Endothelial cell of umbilical vein (primary cell): ENCODE measurements at regions of chr1 and their contacts with region 1.

Region 1: GRCh38 chr1:81760477-81761097 is 40.1 kb upstream of the ADGRL2 start:
- DNase-seq: peak; percentile 62
- H3K4me3 ChIP-seq: no peak overlapping the region
- H3K27ac ChIP-seq: no peak overlapping the region
- H3K4me1 ChIP-seq: peaks cover 3% of the 10 kb centered on the region
- H3K27me3 ChIP-seq: no peaks in the 10 kb centered on the region
- CTCF ChIP-seq: peak; percentile 7 to 18
- POLR2A ChIP-seq: no peak

Region 2: DNA sequence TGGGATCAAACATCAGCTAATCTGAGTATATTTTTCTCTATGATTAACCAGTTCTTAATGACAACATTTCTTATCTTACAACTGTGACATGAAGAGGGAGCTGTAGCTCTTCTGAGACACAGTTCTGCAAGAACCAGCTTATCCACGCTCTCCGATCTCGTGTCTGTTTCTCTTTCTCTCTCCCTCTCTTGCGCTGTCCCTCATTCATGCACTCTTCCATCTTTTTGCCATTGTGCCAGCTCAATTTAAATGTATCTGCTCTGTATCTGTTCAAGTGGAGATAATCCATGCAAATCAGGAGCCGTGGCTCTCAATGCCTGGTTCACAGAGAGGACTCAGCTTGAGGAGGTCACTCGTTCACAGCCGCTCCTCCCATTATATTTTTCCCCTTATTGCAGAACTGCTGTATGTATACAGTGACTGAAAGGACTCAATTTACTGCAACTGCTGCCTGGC is 454.6 kb before region 1 on chr1:
- CTCF ChIA-PET with region 1: interaction called, 15 read pairs
- POLR2A ChIA-PET with region 1: no interaction called
- dilution Hi-C with region 1: no loop called
- intact Hi-C with region 1: loop called (anchors 10 kb)
- DNase-seq: peak; percentile 65
- H3K4me3 ChIP-seq: peak overlapping the region; percentile 42 to 75 (median 47)
- H3K27ac ChIP-seq: no peak overlapping the region
- H3K4me1 ChIP-seq: no peaks in the 10 kb centered on the region
- H3K27me3 ChIP-seq: peaks cover 0 to 4% of the 10 kb centered on the region in 2 experiments
- CTCF ChIP-seq: peak; percentile 15 to 28
- POLR2A ChIP-seq: no peak

Region 3: DNA sequence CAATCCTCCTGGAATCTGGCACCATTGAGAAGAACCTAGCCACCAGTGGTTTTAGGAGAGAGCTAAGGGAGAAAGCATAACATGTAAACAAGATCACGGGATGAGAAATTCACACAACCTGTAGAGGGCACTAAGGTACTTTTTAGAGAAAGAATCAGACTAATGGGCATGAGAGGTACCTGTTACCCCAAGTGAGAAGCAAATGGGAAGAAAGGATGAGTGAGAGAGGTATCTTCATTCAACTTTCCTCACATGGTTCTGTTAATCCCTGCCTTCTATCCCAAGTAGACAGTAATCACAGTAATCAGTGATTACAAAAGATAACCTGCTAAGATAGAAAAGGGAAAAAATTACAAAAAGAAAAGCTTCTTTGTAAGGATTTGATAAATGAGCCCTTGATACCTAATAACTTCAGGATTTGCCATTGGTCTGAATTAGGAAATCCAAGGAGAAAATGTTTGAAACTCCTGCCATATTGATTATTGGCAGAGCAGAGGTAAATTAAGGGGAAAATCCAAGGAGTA is 210.9 kb before region 1 on chr1:
- CTCF ChIA-PET with region 1: interaction called, 201 read pairs
- POLR2A ChIA-PET with region 1: no interaction called
- dilution Hi-C with region 1: no loop called
- intact Hi-C with region 1: loop called (anchors 1 kb)
- DNase-seq: peak; percentile 77
- H3K4me3 ChIP-seq: no peak overlapping the region
- H3K27ac ChIP-seq: no peak overlapping the region
- H3K4me1 ChIP-seq: no peaks in the 10 kb centered on the region
- H3K27me3 ChIP-seq: no peaks in the 10 kb centered on the region
- CTCF ChIP-seq: peak; percentile 31 to 41
- POLR2A ChIP-seq: no peak

Region 4: GRCh38 chr1:81670286-81670685 is 90.3 kb before region 1 on chr1:
- CTCF ChIA-PET with region 1: interaction called, 15 read pairs
- POLR2A ChIA-PET with region 1: no interaction called
- dilution Hi-C with region 1: no loop called
- intact Hi-C with region 1: no loop called
- DNase-seq: peak; percentile 98
- H3K4me3 ChIP-seq: no peak overlapping the region
- H3K27ac ChIP-seq: no peak overlapping the region
- H3K4me1 ChIP-seq: peaks cover 8% of the 10 kb centered on the region
- H3K27me3 ChIP-seq: no peaks in the 10 kb centered on the region
- CTCF ChIP-seq: no peak
- POLR2A ChIP-seq: no peak

Region 5: GRCh38 chr1:81731989-81732388 is 28.6 kb before region 1 on chr1:
- CTCF ChIA-PET with region 1: interaction called, 11 read pairs
- POLR2A ChIA-PET with region 1: no interaction called
- dilution Hi-C with region 1: no loop called
- intact Hi-C with region 1: no loop called
- DNase-seq: peak; percentile 70
- H3K4me3 ChIP-seq: no peak overlapping the region
- H3K27ac ChIP-seq: peak overlapping the region; percentile 46
- H3K4me1 ChIP-seq: peaks cover 13% of the 10 kb centered on the region
- H3K27me3 ChIP-seq: no peaks in the 10 kb centered on the region
- CTCF ChIP-seq: no peak
- POLR2A ChIP-seq: no peak